Activated CD4-positive, alpha-beta memory T cell treated with anti-CD3 and anti-CD28 coated beads for 36 hours (primary cell): ENCODE measurements at regions of chr6 and their contacts with region 1.

Region 1: DNA sequence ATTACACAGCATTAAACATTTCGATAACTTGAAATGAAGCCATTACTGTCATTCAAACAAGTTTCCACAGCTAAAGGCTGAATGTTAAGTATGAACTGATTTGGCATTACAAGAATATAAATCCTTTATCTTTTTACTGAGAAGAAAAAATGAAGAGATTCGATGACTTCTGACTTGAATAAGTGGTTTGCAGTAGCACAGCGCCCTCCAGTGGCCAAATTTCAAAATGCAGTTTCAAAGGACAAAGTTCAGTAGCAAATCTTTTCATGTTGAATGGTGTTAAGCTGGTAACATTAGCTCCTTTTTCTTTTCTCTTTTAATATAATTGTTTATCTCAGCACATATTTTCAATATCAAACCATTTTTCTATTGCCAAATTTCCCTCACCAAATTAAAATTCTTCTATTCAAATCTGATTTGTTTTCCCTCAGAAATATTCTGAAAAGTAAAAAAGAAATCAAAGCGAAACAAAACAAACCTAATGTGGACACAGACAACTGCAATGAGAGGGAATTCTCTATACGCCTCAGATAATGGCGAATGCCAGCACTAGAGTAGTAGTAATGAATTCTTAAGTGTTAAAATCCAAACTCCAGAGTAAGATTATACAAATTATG is 145.7 kb downstream of the BTBD9 start:
- DNase-seq: peak; percentile 88
- H3K4me3 Mint-ChIP-seq: no peak overlapping the region
- H3K27ac Mint-ChIP-seq: no peak overlapping the region
- H3K4me1 Mint-ChIP-seq: peaks cover 9% of the 10 kb centered on the region
- H3K27me3 Mint-ChIP-seq: no peaks in the 10 kb centered on the region

Region 2: DNA sequence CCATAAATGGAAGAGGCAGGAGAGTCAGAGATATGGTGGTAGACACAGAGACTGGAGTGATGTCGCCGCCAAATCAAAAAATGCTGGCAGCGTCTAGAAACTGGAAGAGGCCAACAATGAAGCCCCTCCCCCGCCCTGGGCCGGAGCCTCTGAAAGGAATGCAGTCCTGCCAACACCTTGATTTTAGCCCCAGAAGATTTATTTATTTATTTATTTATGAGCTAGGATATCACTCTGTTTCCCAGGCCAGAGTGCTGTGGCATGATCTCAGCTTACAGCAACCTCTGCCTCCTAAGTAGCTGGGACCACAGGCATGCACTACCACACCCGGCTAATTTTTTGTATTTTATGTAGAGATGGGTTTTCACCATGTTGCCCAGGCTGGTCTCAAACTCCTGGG is 911.7 kb before region 1 on chr6:
- CTCF ChIA-PET with region 1: no interaction called
- POLR2A ChIA-PET with region 1: no interaction called
- intact Hi-C with region 1: loop called (anchors 10 kb)
- DNase-seq: no peak
- H3K4me3 Mint-ChIP-seq: no peak overlapping the region
- H3K27ac Mint-ChIP-seq: no peak overlapping the region
- H3K4me1 Mint-ChIP-seq: no peaks in the 10 kb centered on the region
- H3K27me3 Mint-ChIP-seq: no peaks in the 10 kb centered on the region

Region 3: DNA sequence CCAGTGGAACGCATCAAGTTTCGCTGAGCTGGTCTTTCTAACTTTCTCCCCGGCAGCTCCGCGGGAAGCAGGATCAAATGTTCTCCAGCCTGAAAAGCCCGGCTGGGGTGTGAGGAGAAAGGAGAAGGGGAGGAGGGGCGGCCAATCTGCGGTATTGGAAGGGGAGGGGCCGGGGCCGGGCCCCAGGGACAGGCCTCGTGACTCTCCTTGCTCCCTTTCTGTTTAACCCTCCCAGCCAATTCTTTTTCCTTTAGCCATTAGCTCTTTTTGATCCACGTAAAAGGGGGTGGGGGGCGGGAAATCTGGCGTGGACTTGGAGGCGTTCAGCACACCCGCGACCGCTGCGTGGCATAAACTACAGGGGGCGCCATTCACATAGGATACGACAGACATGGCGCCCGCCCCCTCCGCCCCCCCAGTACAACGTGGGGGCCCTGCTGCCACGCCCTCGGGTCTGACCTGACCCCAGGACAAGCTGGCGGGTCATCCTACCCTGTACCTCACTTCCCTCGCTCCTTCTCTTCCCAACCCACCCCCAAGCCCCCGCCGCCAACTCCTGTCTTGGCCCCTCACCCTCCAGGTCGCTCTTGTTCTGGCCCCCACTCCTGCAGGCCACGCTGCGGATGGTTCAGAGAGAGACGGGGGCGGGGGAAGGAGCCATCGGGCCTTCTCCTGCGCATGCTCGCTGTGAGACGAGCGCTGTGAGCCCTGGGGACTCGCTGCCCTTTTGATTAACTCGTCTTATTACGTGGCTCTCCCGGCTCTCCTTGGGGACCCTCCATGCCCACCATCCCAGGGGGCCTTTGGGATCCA is 788.6 kb before region 1 on chr6:
- CTCF ChIA-PET with region 1: interaction called, 15 read pairs
- POLR2A ChIA-PET with region 1: no interaction called
- intact Hi-C with region 1: no loop called
- DNase-seq: peak; percentile 83
- H3K4me3 Mint-ChIP-seq: peak overlapping the region; percentile 66
- H3K27ac Mint-ChIP-seq: peak overlapping the region; percentile 60
- H3K4me1 Mint-ChIP-seq: peaks cover 9% of the 10 kb centered on the region
- H3K27me3 Mint-ChIP-seq: no peaks in the 10 kb centered on the region

Region 4: DNA sequence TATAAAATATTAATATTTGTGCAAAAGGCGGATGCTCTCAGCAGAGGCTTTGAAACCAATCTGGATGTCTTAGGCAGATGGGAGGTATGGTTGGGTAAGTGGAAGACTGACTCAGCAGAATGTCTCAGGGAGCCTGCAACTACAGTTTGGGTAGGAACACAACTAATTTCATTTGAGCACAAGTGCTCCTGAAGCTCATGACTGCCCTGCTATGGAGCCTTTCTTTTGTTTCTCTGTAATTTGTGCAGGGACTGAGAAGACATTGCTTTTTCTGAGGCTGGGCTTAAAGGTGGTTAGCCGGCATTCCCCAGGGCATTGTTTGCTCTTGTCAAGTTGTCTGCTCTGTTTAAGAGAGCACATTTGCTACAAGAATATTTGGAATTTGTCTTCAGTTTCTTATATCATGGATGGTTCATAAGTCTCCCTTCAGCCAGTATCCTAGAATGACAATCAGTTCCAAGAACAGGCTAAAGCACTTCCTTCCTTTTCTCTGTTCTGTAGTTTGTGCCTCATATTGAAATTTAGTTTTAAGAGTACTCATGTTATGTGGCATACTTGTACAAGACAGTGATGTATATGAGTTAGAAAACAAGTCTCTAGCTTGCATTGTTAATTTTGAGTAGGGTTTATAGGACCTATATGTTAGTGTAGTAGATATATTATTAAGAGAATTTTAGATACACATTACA is 466.2 kb before region 1 on chr6:
- CTCF ChIA-PET with region 1: interaction called, 21 read pairs
- POLR2A ChIA-PET with region 1: no interaction called
- intact Hi-C with region 1: loop called (anchors 10 kb)
- DNase-seq: no peak
- H3K4me3 Mint-ChIP-seq: no peak overlapping the region
- H3K27ac Mint-ChIP-seq: no peak overlapping the region
- H3K4me1 Mint-ChIP-seq: peaks cover 49% of the 10 kb centered on the region
- H3K27me3 Mint-ChIP-seq: no peaks in the 10 kb centered on the region

Region 5: DNA sequence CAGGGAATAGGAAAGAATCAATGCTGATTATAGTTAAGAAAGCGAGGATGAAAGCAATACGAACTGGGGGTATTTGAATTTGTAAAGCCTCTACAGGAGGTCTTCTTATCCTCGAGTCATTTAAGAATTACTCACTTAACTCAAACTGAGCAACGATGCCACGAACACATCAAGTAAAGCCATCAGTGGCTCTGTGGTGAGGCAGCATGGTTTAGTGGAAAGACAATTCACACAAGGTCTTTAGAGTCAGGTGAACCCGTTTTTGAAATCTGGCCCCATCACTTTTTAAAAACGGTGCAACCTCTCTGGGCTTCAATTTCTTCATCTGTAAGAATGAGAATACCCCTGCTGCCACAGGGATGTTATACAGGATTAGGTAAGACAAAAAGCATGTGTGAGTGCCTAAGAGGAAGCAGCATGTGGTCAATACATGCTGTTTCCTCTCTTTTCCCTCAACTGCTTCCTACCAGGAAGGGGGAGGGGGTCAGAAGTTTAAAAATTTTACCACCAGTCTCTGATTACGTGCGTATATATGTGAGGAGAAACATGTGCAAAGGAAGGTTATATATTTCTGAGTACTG is 16.3 kb before region 1 on chr6:
- CTCF ChIA-PET with region 1: interaction called, 19 read pairs
- POLR2A ChIA-PET with region 1: no interaction called
- intact Hi-C with region 1: no loop called
- DNase-seq: no peak
- H3K4me3 Mint-ChIP-seq: no peak overlapping the region
- H3K27ac Mint-ChIP-seq: no peak overlapping the region
- H3K4me1 Mint-ChIP-seq: peaks cover 4% of the 10 kb centered on the region
- H3K27me3 Mint-ChIP-seq: no peaks in the 10 kb centered on the region

Region 6: GRCh38 chr6:38570750-38571149 is 76.7 kb after region 1 on chr6:
- CTCF ChIA-PET with region 1: interaction called, 18 read pairs
- POLR2A ChIA-PET with region 1: no interaction called
- intact Hi-C with region 1: no loop called
- DNase-seq: no peak
- H3K4me3 Mint-ChIP-seq: no peak overlapping the region
- H3K27ac Mint-ChIP-seq: no peak overlapping the region
- H3K4me1 Mint-ChIP-seq: peaks cover 23% of the 10 kb centered on the region
- H3K27me3 Mint-ChIP-seq: no peaks in the 10 kb centered on the region

Region 7: GRCh38 chr6:39029156-39030011 is 535.3 kb after region 1 on chr6:
- CTCF ChIA-PET with region 1: no interaction called
- POLR2A ChIA-PET with region 1: no interaction called
- intact Hi-C with region 1: no loop called
- DNase-seq: peak; percentile 68
- H3K4me3 Mint-ChIP-seq: no peak overlapping the region
- H3K27ac Mint-ChIP-seq: no peak overlapping the region
- H3K4me1 Mint-ChIP-seq: no peaks in the 10 kb centered on the region
- H3K27me3 Mint-ChIP-seq: peaks cover 29% of the 10 kb centered on the region